Naive thymus-derived CD4-positive, alpha-beta T cell (primary cell): ENCODE measurements at regions of chr16 and their contacts with region 1.

Region 1: DNA sequence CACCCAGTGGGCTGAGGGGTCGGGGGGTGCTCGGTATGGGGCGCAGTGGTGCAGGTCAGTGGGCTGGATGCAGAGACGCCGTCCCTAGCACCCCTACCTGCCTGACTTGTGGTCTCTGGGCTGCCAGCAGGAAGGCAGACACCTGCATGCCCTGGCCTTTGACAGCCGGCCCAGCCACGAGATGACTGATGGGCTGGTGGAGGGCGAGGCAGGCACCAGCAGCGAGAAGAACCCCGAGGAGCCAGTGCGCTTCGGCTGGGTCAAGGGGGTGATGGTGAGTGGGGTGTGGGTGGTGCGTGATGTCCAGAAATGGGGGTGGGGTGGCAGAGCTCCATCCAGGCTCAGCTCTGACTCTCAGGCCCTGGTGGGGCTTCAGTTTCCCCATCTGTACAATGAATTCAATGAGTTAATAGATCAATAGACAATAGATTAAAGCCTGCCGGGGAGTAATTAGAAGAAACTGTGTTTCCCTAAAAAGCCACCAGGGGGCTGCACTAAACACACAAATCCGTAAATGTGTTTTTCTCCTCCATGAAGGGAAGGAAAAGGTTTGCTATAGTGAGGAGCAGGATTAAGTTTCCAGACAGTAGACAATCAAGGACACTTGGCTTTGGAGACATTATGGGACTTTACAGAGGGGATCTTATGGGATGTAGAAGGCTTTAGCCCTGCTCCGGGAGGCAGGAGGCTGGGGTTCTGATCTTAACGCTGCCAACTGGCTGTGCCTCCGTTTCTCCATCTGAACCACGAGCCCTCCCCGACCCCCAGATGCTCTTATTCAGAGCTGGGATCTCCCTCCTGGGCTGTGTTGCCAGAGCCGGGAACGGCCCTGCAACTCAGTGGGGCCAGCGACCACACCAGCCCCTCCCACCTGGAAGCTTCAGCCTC is 2.2 kb downstream of the SLC12A3 start:
- DNase-seq: peak in 7 of 9 donors; percentile 45 to 68 (median 56)
- ATAC-seq: peak; percentile 55
- H3K4me3 ChIP-seq: no peak overlapping the region
- H3K4me3 Mint-ChIP-seq: no peak overlapping the region
- H3K27ac ChIP-seq: no peak overlapping the region
- H3K27ac Mint-ChIP-seq: peak overlapping the region in 2 of 9 donors; percentile 70 to 82
- H3K4me1 ChIP-seq: peaks cover 0 to 14% of the 10 kb centered on the region in 2 donors
- H3K4me1 Mint-ChIP-seq: peaks cover 0 to 19% (median 16%) of the 10 kb centered on the region in 7 donors
- H3K27me3 ChIP-seq: no peaks in the 10 kb centered on the region
- H3K27me3 Mint-ChIP-seq: no peaks in the 10 kb centered on the region

Region 2: GRCh38 chr16:55225972-55226542 is 1641.1 kb before region 1 on chr16:
- CTCF ChIA-PET with region 1: no interaction called
- POLR2A ChIA-PET with region 1: no interaction called
- intact Hi-C with region 1: no loop called
- DNase-seq: no peak
- ATAC-seq: no peak
- H3K4me3 ChIP-seq: no peak overlapping the region
- H3K4me3 Mint-ChIP-seq: no peak overlapping the region
- H3K27ac ChIP-seq: no peak overlapping the region
- H3K27ac Mint-ChIP-seq: no peak overlapping the region
- H3K4me1 ChIP-seq: no peaks in the 10 kb centered on the region
- H3K4me1 Mint-ChIP-seq: no peaks in the 10 kb centered on the region
- H3K27me3 ChIP-seq: no peaks in the 10 kb centered on the region
- H3K27me3 Mint-ChIP-seq: peaks cover 0 to 18% (median 17%) of the 10 kb centered on the region in 5 donors

Region 3: GRCh38 chr16:56332464-56333079 is 534.6 kb before region 1 on chr16:
- CTCF ChIA-PET with region 1: no interaction called
- POLR2A ChIA-PET with region 1: no interaction called
- intact Hi-C with region 1: no loop called
- DNase-seq: no peak
- ATAC-seq: peak; percentile 11
- H3K4me3 ChIP-seq: no peak overlapping the region
- H3K4me3 Mint-ChIP-seq: no peak overlapping the region
- H3K27ac ChIP-seq: no peak overlapping the region
- H3K27ac Mint-ChIP-seq: no peak overlapping the region
- H3K4me1 ChIP-seq: no peaks in the 10 kb centered on the region
- H3K4me1 Mint-ChIP-seq: peaks cover 0 to 1% (median 0%) of the 10 kb centered on the region in 7 donors
- H3K27me3 ChIP-seq: no peaks in the 10 kb centered on the region
- H3K27me3 Mint-ChIP-seq: no peaks in the 10 kb centered on the region

Region 4: GRCh38 chr16:56911771-56912571 is 44.8 kb after region 1 on chr16:
- CTCF ChIA-PET with region 1: no interaction called
- POLR2A ChIA-PET with region 1: no interaction called
- intact Hi-C with region 1: loop called in 1 of 2 experiments (anchors 2 kb)
- DNase-seq: no peak
- ATAC-seq: peak; percentile 71
- H3K4me3 ChIP-seq: no peak overlapping the region
- H3K4me3 Mint-ChIP-seq: no peak overlapping the region
- H3K27ac ChIP-seq: no peak overlapping the region
- H3K27ac Mint-ChIP-seq: peak overlapping the region in 1 of 9 donors; percentile 30
- H3K4me1 ChIP-seq: peaks cover 7 to 18% of the 10 kb centered on the region in 2 donors
- H3K4me1 Mint-ChIP-seq: peaks cover 7 to 38% (median 24%) of the 10 kb centered on the region in 7 donors
- H3K27me3 ChIP-seq: no peaks in the 10 kb centered on the region
- H3K27me3 Mint-ChIP-seq: peaks cover 0 to 17% (median 0%) of the 10 kb centered on the region in 5 donors

Region 5: DNA sequence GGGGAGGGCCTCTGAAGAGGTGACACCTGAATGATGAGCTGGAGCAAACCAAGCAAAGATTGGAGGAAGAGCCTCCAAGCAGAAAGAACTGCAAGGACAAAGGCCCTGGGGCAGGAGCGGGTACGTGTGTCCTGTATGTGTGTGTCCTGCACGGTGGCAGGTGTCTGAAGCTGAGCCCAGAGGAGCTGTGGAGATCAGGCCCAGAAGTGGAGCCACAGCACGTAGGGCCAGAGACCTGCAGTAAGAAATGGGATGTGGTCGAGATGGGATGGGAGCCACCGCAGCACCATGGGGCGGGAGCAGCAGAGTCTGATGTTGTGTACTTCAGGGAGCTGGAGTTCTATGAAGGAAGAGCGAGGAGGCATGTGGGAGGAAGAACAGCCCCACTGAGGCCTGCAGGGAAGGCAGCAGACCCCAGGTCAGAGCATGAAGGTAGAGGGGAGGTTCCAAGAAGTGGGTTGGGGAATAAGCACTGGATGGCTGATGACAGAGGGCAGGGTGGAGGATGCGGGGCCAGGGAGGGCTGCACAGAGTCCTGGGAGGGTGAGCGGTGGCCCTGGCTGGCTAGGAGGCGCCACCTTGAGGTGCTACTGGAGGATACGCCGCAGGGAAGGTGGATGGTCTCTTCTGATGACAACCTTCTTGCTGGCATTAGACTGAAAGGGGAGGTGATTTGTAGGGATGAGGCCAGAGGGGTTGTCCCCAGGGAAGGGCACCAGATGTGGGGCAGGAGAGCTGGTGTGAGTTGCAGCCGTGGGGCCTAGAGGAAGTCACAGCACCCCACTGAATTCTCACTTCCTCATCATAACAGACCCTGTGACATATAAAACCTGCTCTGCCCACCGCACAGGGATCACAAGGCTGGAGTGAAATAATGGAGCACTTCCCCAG is 83.9 kb after region 1 on chr16:
- CTCF ChIA-PET with region 1: interaction called, 18 read pairs
- POLR2A ChIA-PET with region 1: no interaction called
- intact Hi-C with region 1: loop called in 1 of 2 experiments (anchors 1 kb)
- DNase-seq: peak in 7 of 9 donors; percentile 20 to 62 (median 39)
- ATAC-seq: peak; percentile 81
- H3K4me3 ChIP-seq: no peak overlapping the region
- H3K4me3 Mint-ChIP-seq: no peak overlapping the region
- H3K27ac ChIP-seq: no peak overlapping the region
- H3K27ac Mint-ChIP-seq: peak overlapping the region in 5 of 9 donors; percentile 5 to 84 (median 16)
- H3K4me1 ChIP-seq: no peaks in the 10 kb centered on the region
- H3K4me1 Mint-ChIP-seq: peaks cover 0 to 18% (median 7%) of the 10 kb centered on the region in 7 donors
- H3K27me3 ChIP-seq: no peaks in the 10 kb centered on the region
- H3K27me3 Mint-ChIP-seq: no peaks in the 10 kb centered on the region